WTC11 (cell line): ENCODE measurements at regions of chr3 and their contacts with region 1.

Region 1: GRCh38 chr3:65466300-65466988 is 572.3 kb downstream of the MAGI1 start:
- DNase-seq: peak; percentile 45
- ATAC-seq: peak; percentile 100
- H3K4me3 Mint-ChIP-seq: no peak overlapping the region
- H3K27ac Mint-ChIP-seq: no peak overlapping the region
- H3K4me1 Mint-ChIP-seq: peaks cover 23% of the 10 kb centered on the region
- H3K27me3 Mint-ChIP-seq: no peaks in the 10 kb centered on the region
- CTCF ChIP-seq: no peak

Region 2: DNA sequence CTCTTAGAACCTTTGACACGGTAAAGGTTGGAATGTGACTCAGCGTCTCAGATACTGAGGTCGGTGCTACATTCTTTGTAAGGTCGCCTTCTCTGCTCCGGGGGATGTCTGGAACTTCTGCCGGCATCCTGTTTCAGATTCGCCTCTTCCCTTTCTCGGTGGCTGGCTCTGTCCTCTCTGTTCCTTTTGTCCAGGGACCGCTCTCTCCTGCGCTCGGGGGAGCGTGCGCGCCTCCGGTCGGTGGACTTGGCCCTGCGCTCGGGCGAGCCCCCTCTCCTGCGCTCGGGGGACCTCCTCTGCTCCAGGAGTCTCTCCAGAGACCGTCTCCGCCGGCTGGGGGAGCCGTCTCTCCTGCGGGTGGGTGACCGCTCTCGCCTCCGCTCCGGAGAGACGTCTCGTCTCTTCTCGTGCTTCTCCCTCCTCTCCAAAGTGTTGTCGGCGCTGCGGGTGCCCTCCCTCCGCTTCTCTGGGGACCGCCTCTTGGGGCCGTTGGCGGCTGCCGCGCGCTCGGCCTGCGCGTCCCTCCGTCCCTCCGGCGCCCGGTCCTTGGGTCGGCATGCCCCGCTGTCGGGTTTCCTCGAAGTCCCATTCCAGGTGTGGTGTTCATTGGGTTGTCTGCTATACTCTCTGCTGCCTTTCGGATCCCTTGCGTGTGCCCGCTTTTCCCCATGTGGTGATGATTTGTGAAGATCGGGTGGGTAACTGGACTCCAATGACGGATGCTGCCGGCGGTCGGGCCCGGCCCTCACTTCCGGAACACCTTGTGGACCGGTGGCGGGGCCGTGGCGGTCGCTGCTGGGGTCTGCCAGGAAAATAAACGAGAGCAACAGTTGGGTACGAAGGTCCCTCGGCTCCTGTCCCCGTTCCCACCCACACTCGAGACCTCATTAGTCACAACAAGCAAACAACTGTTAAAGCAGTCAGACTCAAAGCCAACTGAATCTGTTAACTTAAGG is 109.8 kb before region 1 on chr3:
- CTCF ChIA-PET with region 1: no interaction called
- POLR2A ChIA-PET with region 1: no interaction called
- DNase-seq: peak; percentile 83
- ATAC-seq: peak; percentile 92
- H3K4me3 Mint-ChIP-seq: peak overlapping the region; percentile 69
- H3K27ac Mint-ChIP-seq: peak overlapping the region; percentile 75; the same call in 1 of the 2 replicates
- H3K4me1 Mint-ChIP-seq: peaks cover 31% of the 10 kb centered on the region
- H3K27me3 Mint-ChIP-seq: no peaks in the 10 kb centered on the region
- CTCF ChIP-seq: no peak

Region 3: DNA sequence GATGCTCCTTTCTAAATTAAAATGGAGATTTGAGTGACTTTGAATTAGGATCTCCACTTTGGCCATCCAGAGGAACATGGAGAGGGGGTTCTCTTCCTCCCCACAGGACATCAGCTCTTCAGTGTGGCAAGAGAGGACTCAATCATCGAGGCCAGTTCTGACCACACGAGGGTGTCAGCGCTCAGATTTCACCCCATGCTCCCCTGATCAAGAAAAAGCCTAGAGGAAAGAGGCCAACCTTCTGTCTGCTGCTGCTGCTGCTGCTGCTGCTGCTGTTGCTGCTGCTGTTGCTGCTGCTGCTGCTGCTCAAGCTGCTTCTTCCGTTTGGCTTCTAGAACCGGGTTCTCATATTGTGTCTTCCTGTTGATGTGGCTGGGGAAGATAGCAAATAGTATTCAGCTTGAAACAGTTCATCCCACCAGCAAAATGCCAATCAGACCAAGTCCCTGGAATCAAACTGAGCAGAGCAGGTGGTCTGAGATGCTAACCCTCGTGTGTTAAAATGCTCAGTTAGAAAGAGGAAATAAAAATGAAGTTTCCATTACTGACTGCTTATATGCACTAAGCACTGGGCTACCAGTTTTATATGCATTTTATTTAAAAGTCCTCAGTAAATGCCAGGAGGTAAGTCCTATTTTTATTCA is 26.7 kb before region 1 on chr3:
- CTCF ChIA-PET with region 1: interaction called, 15 read pairs
- POLR2A ChIA-PET with region 1: no interaction called
- DNase-seq: peak; percentile 62
- ATAC-seq: peak; percentile 97
- H3K4me3 Mint-ChIP-seq: no peak overlapping the region
- H3K27ac Mint-ChIP-seq: peak overlapping the region; percentile 68
- H3K4me1 Mint-ChIP-seq: peaks cover 20% of the 10 kb centered on the region
- H3K27me3 Mint-ChIP-seq: no peaks in the 10 kb centered on the region
- CTCF ChIP-seq: peak; percentile 27; the same call in 1 of the 2 replicates

Region 4: GRCh38 chr3:65479990-65480389 is 13.5 kb after region 1 on chr3:
- CTCF ChIA-PET with region 1: interaction called, 12 read pairs
- POLR2A ChIA-PET with region 1: no interaction called
- DNase-seq: no peak
- ATAC-seq: no peak
- H3K4me3 Mint-ChIP-seq: no peak overlapping the region
- H3K27ac Mint-ChIP-seq: peak overlapping the region; percentile 69; the same call in 1 of the 2 replicates
- H3K4me1 Mint-ChIP-seq: peaks cover 79% of the 10 kb centered on the region
- H3K27me3 Mint-ChIP-seq: no peaks in the 10 kb centered on the region
- CTCF ChIP-seq: no peak

Region 5: DNA sequence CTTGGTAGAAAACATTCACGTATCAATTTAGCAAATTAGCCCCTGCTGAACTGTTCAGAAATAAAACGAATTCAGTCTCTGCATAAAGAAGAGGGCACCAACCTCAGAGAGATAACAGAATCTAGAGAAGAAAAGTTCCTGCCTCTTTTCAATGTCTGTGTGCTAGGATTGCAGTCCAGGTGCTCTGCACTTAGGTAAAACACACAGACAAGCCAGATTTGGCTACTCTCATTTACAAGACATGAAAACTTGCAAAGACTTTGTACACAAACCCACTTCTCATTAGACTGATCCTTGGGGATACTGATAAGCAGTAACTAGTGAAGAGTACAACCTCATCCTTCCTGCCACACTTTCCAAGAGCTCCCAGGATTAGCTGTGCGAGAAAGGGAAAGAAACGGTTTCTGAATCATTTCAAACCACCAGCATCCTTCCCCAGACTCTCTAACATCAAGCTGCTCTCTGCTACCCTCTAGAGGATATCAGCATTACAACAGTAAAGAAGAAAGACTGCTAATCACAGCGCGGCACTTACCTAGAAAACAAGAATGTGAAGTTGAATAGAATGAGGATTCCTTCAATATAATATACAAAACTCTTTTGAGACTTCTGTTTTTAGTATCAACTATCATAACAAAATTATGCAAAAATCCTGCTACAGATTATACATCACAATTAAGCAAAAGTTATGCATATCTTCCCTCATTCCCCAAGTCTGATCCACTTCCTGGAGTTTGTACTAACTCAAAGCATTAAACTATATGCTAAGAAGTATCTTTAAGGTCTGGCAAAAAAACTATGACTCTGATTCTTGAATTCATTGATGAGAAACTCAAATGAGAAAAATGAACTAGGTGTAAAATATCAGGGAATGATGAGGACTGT is 265.8 kb after region 1 on chr3:
- CTCF ChIA-PET with region 1: interaction called, 16 read pairs
- POLR2A ChIA-PET with region 1: no interaction called
- DNase-seq: no peak
- ATAC-seq: peak; percentile 86
- H3K4me3 Mint-ChIP-seq: no peak overlapping the region
- H3K27ac Mint-ChIP-seq: peak overlapping the region; percentile 51; the same call in 1 of the 2 replicates
- H3K4me1 Mint-ChIP-seq: peaks cover 54% of the 10 kb centered on the region
- H3K27me3 Mint-ChIP-seq: no peaks in the 10 kb centered on the region
- CTCF ChIP-seq: peak; percentile 40; the same call in 1 of the 2 replicates